Ovary (tissue), 10 donors: ENCODE measurements at regions of chr17 and their contacts with region 1.

Region 1: DNA sequence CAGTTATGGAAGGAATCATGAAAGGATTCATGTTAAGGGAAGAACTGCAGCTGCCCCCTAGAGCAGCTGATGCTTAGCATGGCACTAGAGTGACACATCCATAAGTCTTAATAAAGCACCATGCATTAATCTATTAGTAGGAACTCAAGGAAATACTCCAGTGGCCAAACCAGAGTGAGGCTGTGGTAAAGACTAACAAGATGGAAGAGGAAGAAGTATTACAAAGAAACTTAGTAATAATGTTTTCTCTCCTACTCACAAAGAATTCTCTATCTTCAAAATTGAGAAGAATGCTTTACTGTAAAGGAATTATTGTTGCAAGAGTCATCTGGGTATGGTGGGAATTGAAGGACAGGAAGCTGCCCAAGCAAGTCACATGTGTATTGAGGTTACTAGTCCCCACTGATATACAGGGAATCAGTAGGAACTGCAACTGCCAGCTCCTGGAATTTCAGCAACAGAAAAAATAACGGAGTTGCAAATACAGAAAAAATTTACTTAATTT is 29.9 kb upstream of the TOM1L1 start:
- DNase-seq: no peak
- H3K4me3 ChIP-seq: no peak overlapping the region
- H3K27ac ChIP-seq: no peak overlapping the region
- H3K4me1 ChIP-seq: no peaks in the 10 kb centered on the region
- H3K27me3 ChIP-seq: no peaks in the 10 kb centered on the region
- CTCF ChIP-seq: no peak
- EP300 ChIP-seq: no peak
- POLR2A ChIP-seq: no peak

Region 2: GRCh38 chr17:54909766-54910165 is 39.0 kb after region 1 on chr17:
- intact Hi-C with region 1: loop called in 1 of 4 experiments (anchors 1 kb)
- DNase-seq: no peak
- H3K4me3 ChIP-seq: no peak overlapping the region
- H3K27ac ChIP-seq: no peak overlapping the region
- H3K4me1 ChIP-seq: no peaks in the 10 kb centered on the region
- H3K27me3 ChIP-seq: no peaks in the 10 kb centered on the region
- CTCF ChIP-seq: no peak
- EP300 ChIP-seq: no peak
- POLR2A ChIP-seq: no peak

Region 3: GRCh38 chr17:54924405-54924804 is 53.7 kb after region 1 on chr17:
- intact Hi-C with region 1: no loop called
- DNase-seq: no peak
- H3K4me3 ChIP-seq: no peak overlapping the region
- H3K27ac ChIP-seq: no peak overlapping the region
- H3K4me1 ChIP-seq: no peaks in the 10 kb centered on the region
- H3K27me3 ChIP-seq: no peaks in the 10 kb centered on the region
- CTCF ChIP-seq: no peak
- EP300 ChIP-seq: no peak
- POLR2A ChIP-seq: no peak